Activated CD8-positive, alpha-beta T cell treated with anti-CD3 and anti-CD28 coated beads for 36 hours (primary cell): ENCODE measurements at regions of chr17 and their contacts with region 1.

Region 1: DNA sequence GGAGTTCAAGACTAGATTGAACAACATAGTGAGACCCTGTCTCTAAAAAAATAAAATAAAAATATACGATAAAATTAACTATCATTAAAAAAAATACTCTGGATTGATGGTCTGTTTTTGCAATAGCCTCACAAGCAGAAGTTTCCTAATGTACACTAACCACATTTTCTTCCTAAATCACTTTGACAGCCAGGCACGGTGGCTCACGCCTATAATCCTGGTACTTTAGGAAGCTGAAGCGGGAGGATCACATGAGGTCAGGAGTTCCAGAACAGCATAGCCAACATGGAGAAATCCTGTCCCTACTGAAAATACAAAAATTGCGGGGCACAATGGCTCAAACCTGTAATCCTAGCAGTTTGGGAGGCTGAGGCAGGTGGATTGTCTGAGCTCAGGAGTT is 64.7 kb downstream of the HELZ start:
- DNase-seq: no peak
- ATAC-seq: no peak
- H3K4me3 Mint-ChIP-seq: no peak overlapping the region
- H3K27ac Mint-ChIP-seq: no peak overlapping the region
- H3K4me1 Mint-ChIP-seq: no peaks in the 10 kb centered on the region
- H3K27me3 Mint-ChIP-seq: no peaks in the 10 kb centered on the region
- CTCF ChIP-seq: no peak

Region 2: DNA sequence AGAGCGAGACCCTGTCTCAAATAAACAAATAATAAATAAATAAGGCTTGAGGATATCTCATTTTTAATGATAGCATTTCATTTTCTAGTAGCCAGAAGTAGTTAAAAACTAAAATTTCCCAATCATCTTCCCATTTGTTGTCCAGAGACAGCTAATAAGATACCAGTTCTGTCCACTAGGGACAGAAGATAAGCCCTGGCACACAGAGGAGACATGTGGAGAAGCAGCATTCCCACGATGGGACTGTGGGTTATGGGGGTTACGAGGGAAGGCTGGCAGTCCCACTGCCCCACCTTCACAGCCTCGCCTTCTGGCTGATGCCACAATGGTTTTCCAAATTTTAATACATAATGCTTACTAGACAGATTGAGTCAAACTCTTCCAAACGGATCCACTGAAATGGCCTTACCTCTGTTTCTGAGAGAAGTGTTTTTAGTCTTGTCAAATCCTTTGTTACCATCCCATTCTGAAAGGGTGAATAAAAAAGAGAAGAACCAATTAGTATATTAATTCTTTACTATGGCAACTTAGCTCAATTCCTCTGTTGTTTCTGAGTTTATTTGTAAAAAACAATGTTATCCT is 20.5 kb after region 1 on chr17:
- CTCF ChIA-PET with region 1: interaction called, 10 read pairs
- POLR2A ChIA-PET with region 1: no interaction called
- intact Hi-C with region 1: no loop called
- DNase-seq: no peak
- ATAC-seq: no peak
- H3K4me3 Mint-ChIP-seq: no peak overlapping the region
- H3K27ac Mint-ChIP-seq: no peak overlapping the region
- H3K4me1 Mint-ChIP-seq: peaks cover 17% of the 10 kb centered on the region
- H3K27me3 Mint-ChIP-seq: no peaks in the 10 kb centered on the region
- CTCF ChIP-seq: peak; percentile 55

Region 3: DNA sequence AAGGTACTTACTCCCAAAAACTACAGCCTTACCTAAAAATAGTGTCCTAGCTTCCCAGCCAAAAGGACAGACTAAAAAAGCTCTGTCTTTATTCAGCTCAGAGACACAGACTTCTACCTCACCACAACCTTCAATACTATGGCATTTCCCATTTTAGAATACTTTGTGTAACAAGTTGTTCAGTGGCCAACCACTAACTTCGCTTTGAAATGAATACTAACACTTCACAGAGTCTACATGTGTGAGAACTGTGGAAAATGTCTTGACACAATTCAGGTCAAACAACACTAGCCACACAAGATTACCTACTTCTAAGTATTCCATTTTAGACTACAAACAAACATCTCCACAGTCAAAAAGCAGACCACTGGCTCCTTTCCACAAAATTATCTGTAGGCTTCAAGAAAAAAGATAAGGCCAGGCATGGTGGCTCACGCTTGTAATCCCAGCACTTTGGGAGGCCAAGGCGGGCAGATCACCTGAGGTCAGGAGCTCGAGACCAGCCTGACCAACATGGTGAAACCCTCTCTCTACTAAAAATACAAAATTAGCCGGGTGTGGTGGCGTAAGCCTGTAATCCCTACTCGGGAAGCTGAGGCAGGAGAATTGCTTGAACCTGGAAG is 61.6 kb after region 1 on chr17:
- CTCF ChIA-PET with region 1: no interaction called
- POLR2A ChIA-PET with region 1: no interaction called
- intact Hi-C with region 1: no loop called
- DNase-seq: no peak
- ATAC-seq: no peak
- H3K4me3 Mint-ChIP-seq: no peak overlapping the region
- H3K27ac Mint-ChIP-seq: peak overlapping the region; percentile 36
- H3K4me1 Mint-ChIP-seq: peaks cover 46% of the 10 kb centered on the region
- H3K27me3 Mint-ChIP-seq: peaks cover 3% of the 10 kb centered on the region
- CTCF ChIP-seq: no peak

Region 4: GRCh38 chr17:67297454-67297960 is 117.2 kb after region 1 on chr17:
- CTCF ChIA-PET with region 1: no interaction called
- POLR2A ChIA-PET with region 1: no interaction called
- intact Hi-C with region 1: no loop called
- DNase-seq: no peak
- ATAC-seq: no peak
- H3K4me3 Mint-ChIP-seq: no peak overlapping the region
- H3K27ac Mint-ChIP-seq: no peak overlapping the region
- H3K4me1 Mint-ChIP-seq: no peaks in the 10 kb centered on the region
- H3K27me3 Mint-ChIP-seq: no peaks in the 10 kb centered on the region
- CTCF ChIP-seq: no peak

Region 5: DNA sequence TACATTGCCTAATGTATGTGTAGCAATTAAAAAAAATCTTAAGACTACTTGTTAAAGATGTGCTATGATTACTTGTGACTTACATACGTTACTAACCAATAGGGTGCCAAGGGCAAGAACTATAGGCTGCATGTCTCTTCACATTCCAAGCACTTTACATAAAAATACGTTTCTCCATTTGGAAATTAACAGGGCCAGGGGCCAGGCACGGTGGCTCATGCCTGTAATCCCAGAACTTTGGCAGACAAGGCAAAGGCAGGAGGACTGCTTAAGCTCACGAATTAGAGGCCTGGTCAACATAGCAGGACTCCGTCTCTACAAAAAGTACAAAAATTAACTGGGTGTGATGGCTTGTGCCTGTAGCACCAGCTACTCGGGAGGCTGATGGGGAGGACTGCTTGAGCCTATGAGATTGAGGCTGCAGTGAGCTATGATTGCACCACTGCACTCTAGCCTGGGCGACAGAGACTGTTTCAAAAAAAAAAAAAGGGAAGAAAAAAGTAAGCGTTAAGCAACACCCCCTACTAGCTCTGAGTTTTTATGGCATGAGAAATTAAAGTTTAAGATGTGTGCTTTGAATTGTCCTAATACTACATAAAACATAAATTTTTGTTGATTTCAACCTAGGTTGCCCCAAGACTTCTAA is 173.8 kb after region 1 on chr17:
- CTCF ChIA-PET with region 1: no interaction called
- POLR2A ChIA-PET with region 1: no interaction called
- intact Hi-C with region 1: no loop called
- DNase-seq: no peak
- ATAC-seq: no peak
- H3K4me3 Mint-ChIP-seq: no peak overlapping the region
- H3K27ac Mint-ChIP-seq: no peak overlapping the region
- H3K4me1 Mint-ChIP-seq: peaks cover 19% of the 10 kb centered on the region
- H3K27me3 Mint-ChIP-seq: no peaks in the 10 kb centered on the region
- CTCF ChIP-seq: no peak